ENCODE measurements at regions of chr18 and their contacts with region 1.

Region 1: DNA sequence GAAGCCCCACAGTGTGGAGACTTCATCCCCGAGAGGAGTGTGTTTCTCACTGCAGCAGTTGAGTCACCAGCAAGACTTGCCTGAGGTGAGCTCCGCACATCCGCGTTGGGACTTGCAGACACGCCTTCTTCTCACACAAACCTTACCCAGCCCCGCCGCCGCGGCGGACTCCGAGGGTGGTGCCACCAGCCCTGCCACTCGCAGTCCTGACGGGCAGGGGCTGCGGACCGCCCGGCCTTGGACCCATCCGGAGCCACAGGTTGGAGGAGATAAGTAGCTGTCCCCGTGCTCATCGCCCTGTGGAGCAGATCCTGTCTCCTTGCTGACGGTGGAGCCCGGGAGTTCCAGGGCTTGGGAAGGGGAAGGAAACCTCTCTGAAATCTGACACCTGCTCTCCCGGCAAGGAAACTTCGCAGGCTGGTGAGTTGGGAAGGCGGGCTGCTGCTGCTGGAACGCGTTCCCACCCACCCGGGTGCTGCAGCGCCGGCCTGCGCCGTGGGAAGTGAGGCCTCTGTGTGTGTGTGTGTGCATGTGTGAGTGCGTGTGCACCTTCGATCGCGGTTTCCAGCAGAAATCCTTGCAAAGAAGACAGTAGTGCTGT is at the start of gene RAB27B:
- DNase-seq: peak; percentile 85
- H3K4me3 Mint-ChIP-seq: peak within 1 kb of the TSS; percentile 77
- H3K27ac Mint-ChIP-seq: no peak within 1 kb of the TSS
- H3K4me1 Mint-ChIP-seq: peaks cover 19% of the 10 kb centered on the region
- H3K27me3 Mint-ChIP-seq: no peaks in the 10 kb centered on the region
- total RNA-seq, gene RAB27B: 0.22 to 0.31 TPM

Region 2: GRCh38 chr18:54269893-54270844 is 558.2 kb before region 1 on chr18:
- CTCF ChIA-PET with region 1: no interaction called
- POLR2A ChIA-PET with region 1: no interaction called
- intact Hi-C with region 1: loop called (anchors 10 kb)
- DNase-seq: peak; percentile 78
- H3K4me3 Mint-ChIP-seq: peak overlapping the region; percentile 78
- H3K27ac Mint-ChIP-seq: peak overlapping the region; percentile 94
- H3K4me1 Mint-ChIP-seq: peaks cover 29% of the 10 kb centered on the region
- H3K27me3 Mint-ChIP-seq: no peaks in the 10 kb centered on the region

Region 3: GRCh38 chr18:54712306-54712705 is 116.1 kb before region 1 on chr18:
- CTCF ChIA-PET with region 1: no interaction called
- POLR2A ChIA-PET with region 1: no interaction called
- intact Hi-C with region 1: loop called (anchors 2 kb)
- DNase-seq: peak; percentile 40
- H3K4me3 Mint-ChIP-seq: no peak overlapping the region
- H3K27ac Mint-ChIP-seq: no peak overlapping the region
- H3K4me1 Mint-ChIP-seq: peaks cover 29% of the 10 kb centered on the region
- H3K27me3 Mint-ChIP-seq: peaks cover 5% of the 10 kb centered on the region

Region 4: DNA sequence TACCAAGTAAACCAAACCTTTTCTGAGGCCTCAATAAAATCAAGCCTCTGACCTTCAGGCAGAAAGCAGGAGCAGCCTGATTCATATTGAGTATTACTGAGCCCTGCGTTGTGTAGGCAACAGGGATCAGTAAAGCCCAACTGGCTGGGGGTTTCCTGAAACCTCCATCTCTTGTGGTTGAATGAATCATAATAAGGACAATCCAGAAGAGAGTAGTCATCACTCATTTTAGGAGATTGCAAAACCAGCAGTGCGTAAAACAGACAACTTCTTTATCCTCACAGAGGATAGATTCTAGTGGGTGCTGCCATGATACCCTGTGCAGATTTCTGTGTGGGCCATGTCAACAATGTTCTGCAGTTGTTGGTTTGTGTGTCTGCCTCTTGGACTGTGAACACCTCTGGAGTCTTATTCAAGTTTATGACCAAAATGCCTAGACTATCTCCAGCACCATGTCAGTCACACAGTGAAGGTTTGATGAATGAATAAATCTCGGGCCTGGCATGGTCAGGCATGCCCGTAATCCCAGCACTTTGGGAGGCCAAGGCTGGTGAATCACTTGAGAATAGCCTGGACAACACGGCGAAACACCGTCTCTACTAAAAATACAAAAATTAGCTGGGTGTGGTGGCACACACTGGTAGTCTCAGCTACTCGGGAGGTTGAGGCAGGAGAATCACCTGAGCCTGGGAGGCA is 52.0 kb before region 1 on chr18:
- CTCF ChIA-PET with region 1: no interaction called
- POLR2A ChIA-PET with region 1: no interaction called
- intact Hi-C with region 1: loop called (anchors 1 kb)
- DNase-seq: peak; percentile 62
- H3K4me3 Mint-ChIP-seq: no peak overlapping the region
- H3K27ac Mint-ChIP-seq: no peak overlapping the region
- H3K4me1 Mint-ChIP-seq: peaks cover 10% of the 10 kb centered on the region
- H3K27me3 Mint-ChIP-seq: no peaks in the 10 kb centered on the region

Region 5: GRCh38 chr18:54805571-54806334 is 22.6 kb before region 1 on chr18:
- CTCF ChIA-PET with region 1: no interaction called
- POLR2A ChIA-PET with region 1: no interaction called
- intact Hi-C with region 1: loop called (anchors 2 kb)
- DNase-seq: no peak
- H3K4me3 Mint-ChIP-seq: no peak overlapping the region
- H3K27ac Mint-ChIP-seq: no peak overlapping the region
- H3K4me1 Mint-ChIP-seq: peaks cover 13% of the 10 kb centered on the region
- H3K27me3 Mint-ChIP-seq: no peaks in the 10 kb centered on the region

Region 6: GRCh38 chr18:54852780-54853675 is 24.6 kb after region 1 on chr18:
- CTCF ChIA-PET with region 1: no interaction called
- POLR2A ChIA-PET with region 1: no interaction called
- intact Hi-C with region 1: loop called (anchors 1 kb)
- DNase-seq: no peak
- H3K4me3 Mint-ChIP-seq: no peak overlapping the region
- H3K27ac Mint-ChIP-seq: no peak overlapping the region
- H3K4me1 Mint-ChIP-seq: peaks cover 14% of the 10 kb centered on the region
- H3K27me3 Mint-ChIP-seq: no peaks in the 10 kb centered on the region

Region 7: GRCh38 chr18:54946149-54946581 is 117.8 kb after region 1 on chr18:
- CTCF ChIA-PET with region 1: no interaction called
- POLR2A ChIA-PET with region 1: no interaction called
- intact Hi-C with region 1: loop called (anchors 1 kb)
- DNase-seq: peak; percentile 17
- H3K4me3 Mint-ChIP-seq: peak overlapping the region; percentile 83
- H3K27ac Mint-ChIP-seq: peak overlapping the region; percentile 71
- H3K4me1 Mint-ChIP-seq: peaks cover 17% of the 10 kb centered on the region
- H3K27me3 Mint-ChIP-seq: no peaks in the 10 kb centered on the region